HEK293 (cell line): ENCODE measurements at regions of chr5 and their contacts with region 1.

Region 1: DNA sequence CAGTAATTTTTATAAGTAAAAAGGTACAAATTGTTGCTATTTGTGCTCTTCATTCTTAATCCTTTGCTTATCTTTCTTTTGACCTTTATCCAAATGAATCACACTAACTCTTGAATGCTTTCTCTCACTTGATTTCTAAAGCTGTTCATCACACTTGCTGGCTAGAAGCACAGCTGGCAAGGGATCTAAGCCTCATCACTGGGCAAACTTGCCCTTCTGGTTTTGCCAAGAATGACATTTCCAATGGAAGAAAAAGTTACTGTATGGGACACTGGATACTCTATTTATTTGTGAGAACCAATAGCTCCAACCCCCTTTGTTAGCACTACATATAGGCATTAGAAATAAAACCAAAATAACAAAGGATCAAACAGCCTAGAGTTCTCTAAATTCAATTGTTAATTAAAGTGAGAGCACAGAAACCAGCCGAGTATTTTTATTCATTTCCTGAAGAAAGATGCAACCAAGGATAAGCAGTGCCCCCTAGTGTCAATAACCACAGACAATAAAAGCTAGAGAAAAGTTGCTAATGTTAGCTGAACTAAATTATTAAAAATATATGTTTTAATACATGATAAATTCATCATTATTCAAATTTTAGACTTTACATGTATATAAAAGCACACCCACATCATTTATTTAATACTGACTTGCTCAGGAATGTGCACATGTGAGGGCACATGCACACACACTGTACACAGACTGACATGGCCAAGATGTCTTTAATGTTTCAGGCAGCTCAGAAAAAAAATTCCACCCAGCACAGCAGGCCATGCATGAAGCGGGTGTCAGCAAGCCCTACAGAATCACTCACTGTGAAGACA is 59.8 kb upstream of the POU5F2 start:
- H3K4me3 ChIP-seq: no peak overlapping the region
- H3K27ac ChIP-seq: no peak overlapping the region
- H3K4me1 ChIP-seq: peaks cover 7% of the 10 kb centered on the region
- CTCF ChIP-seq: peak; percentile 19; the same call in 1 of the 2 replicates

Region 2: DNA sequence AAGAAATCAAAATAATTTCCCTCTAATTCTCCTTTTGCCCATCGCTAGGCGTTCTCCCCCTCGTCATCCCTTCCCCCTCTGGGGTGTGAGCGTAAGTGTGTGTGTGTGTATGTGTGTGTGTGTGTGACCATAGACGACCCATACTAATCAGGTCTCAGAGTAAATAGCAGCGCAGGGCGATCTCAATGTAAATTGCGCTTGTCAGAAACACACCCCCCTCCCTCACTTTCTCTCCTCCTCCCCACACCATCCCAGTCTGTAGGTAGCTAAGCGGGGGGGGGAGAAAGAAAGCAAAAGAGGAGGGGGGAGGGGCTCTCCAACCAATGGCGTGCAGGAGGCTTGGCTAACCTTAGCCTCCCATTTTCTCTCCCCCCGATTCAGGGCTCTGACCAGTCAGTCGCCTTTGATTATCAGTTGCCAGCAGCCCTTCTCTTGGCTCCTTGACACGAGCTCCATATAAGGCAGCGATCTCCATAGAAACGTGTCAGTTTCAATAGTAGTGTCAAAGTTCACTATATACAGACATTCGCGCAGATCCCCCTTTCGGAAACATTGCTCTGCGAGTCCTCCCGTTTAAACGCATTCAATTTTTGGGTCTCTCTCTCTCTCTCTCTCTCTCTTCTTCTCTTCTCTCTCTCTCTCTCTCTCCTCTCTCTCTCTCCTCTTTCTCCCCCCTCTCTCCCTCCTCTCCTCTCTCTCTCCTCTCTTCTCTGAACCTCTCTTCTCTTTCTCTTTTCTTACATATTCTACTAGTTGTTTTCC is 218.3 kb before region 1 on chr5 and contains the start of gene NR2F1:
- CTCF ChIA-PET with region 1: interaction called, 12 read pairs
- POLR2A ChIA-PET with region 1: interaction called, 7 read pairs
- H3K4me3 ChIP-seq: peak within 1 kb of the TSS; percentile 78
- H3K27ac ChIP-seq: peak within 1 kb of the TSS; percentile 97
- H3K4me1 ChIP-seq: peaks cover 7% of the 10 kb centered on the region; the same call in 1 of the 2 replicates
- CTCF ChIP-seq: 0 out of 2 replicates have a peak, but pooled peaks have one; percentile 15

Region 3: GRCh38 chr5:93599399-93600120 is 201.6 kb before region 1 on chr5:
- CTCF ChIA-PET with region 1: interaction called, 16 read pairs
- POLR2A ChIA-PET with region 1: no interaction called
- H3K4me3 ChIP-seq: no peak overlapping the region
- H3K27ac ChIP-seq: peak overlapping the region; percentile 84
- H3K4me1 ChIP-seq: peaks cover 38% of the 10 kb centered on the region
- CTCF ChIP-seq: no peak

Region 4: DNA sequence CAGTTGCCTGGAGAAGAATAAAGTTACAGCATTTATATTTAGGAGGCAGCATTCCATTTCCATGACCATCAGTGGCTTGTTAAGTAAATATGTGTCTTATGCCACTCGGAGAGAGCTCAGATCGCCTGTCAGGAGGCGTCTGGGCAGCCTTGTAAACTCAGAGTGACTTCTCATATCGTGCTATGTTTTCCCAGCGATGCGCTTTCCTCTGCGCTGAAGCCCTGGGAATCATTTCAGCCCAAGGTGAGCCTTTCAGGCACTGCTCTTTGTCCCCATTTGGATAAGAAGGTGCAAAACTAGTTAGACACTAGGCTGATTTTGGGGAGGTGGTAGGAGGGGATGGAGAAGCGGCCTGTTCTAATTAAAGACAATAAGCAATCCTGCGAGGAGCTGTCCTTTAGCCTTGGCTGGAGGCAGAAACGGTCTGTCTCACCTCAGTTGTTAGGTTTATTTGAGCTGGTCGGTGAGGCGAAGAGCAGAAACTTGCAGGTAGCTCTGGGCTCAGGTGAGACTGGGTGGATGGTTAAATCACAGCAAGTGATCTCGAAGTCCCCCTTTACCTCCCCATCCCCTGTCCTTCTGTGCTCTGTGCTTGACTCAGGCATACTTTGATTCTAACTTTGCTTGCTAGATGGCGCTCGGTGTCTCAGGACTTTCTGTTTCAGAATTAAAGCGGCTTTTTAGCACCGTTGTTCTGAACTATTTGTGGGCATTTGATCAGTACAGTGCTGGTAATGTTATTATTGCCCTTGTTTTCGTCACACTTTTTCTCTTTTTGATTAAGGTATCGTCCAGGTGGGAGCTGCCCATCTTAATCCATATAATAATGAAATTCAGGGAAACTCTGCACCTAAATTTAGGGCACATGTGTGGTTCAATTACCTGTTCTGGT is 193.6 kb before region 1 on chr5:
- CTCF ChIA-PET with region 1: interaction called, 27 read pairs
- POLR2A ChIA-PET with region 1: interaction called, 3 read pairs
- H3K4me3 ChIP-seq: no peak overlapping the region; the same call in 1 of the 2 replicates
- H3K27ac ChIP-seq: no peak overlapping the region; the same call in 1 of the 2 replicates
- H3K4me1 ChIP-seq: peaks cover 18% of the 10 kb centered on the region
- CTCF ChIP-seq: peak; percentile 56; the same call in 1 of the 2 replicates

Region 5: DNA sequence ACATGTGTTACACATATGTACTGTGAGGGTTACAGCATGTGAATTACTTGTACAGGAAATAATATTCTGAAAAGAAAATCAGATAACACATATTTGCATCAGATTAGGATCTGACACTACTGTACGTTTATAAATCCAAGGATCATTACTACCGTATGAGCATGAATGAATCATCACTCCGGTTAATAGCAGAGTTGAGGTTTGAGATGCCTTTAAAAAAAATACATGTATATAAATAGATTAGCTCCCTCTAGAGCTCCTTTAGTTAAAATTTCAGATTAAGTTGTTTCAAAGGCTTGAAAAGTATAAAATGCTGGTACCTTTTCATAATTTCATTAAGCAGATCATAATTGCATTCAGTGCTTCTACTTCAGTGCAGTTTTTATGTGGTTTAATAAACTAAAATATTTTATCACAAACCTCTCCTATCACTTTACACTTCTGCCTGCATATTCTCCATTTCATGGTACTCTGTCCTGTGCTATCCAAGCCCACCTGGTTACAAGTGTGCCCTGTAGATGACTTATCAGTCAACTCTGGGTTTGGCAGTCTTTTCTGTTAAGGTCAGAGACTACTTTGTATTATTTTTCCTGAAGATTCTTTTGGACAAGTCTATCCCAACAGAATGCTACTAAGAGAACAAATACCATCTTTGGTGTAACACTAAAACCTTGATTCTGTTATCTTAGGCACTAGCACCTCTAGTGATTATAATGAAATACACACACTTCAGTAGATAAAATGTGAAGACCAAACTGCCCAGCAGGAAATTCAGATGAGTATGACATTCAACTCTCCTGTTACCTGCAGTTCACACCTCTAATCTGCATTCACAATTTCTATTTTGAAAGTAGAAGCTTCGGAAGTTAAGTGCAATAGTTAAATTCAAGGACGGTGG is 11.8 kb before region 1 on chr5:
- CTCF ChIA-PET with region 1: interaction called, 11 read pairs
- POLR2A ChIA-PET with region 1: no interaction called
- H3K4me3 ChIP-seq: no peak overlapping the region
- H3K27ac ChIP-seq: no peak overlapping the region
- H3K4me1 ChIP-seq: 0 out of 2 replicates have a peak, but pooled peaks cover 2% of the 10 kb centered on the region
- CTCF ChIP-seq: peak; percentile 15; the same call in 1 of the 2 replicates